GM13976 (cell line): ENCODE measurements at regions of chr4 and their contacts with region 1.

Region 1: GRCh38 chr4:87375719-87376291 is 15.2 kb downstream of the HSD17B11 start:
- DNase-seq: no peak
- CTCF ChIP-seq: peak; percentile 10

Region 2: GRCh38 chr4:87465739-87466366 is 90.0 kb after region 1 on chr4:
- in situ Hi-C with region 1: loop called (anchors 10 kb)
- DNase-seq: peak; percentile 37
- CTCF ChIP-seq: peak; percentile 52

Region 3: DNA sequence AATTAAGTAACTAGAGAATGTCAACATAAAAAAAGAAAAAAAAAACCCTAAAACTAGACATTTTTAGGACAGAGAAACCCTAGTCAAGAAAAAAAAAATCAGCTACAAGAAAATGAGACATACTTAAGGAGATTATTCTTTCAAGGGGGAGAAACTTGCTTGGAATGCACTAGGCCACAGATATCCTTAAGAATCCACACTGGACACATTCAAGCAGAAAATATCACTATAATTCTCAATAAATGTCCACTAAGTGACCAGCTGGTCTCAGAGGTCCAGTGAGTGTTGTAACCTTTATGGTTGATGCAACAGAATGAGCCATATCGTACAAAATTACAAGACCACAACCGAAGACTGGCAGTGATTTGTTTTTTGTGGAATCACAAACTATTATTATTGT is 408.0 kb after region 1 on chr4:
- in situ Hi-C with region 1: no loop called
- DNase-seq: no peak
- CTCF ChIP-seq: no peak